Caco-2 (cell line): ENCODE measurements at regions of chr11 and their contacts with region 1.

Region 1: DNA sequence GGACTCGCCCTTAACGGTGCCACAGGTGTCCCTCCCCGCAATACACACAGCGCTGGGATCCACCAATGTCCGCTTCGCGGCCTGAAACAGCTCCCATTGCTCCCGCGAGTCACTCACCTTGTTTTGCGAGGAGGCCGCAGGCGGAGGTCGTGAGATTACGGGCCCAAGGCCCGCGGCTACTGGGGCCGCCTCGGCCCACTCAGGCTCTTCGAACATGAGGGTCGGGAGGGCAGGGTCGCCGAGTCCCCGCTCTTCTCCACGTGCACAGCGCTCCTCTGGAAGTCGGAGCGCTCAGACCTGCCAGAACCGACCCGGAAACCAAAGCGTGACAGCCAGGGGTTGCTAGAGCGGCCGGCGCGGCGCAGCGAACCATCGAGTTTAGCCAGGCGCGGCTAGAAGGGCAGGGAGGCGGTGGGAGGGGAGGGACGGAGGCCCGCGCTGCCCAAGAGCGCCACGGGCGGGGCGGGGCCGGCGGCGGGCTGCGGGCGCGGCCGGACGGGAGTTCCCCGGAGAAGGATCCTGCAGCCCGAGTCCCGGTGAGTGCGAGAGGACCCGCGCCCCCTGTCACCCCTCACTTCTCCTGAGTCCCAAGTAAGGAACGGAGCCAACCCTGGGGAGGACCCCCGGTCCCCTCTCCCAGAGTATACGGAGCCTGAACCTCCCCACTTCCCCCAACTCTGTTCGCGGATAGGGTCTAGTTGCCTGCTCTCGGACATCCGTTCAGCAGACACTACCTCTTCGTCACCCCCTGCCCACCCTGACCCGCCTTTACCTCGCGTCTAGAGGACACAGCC is at the starts of genes ILK and RRP8:
- DNase-seq: peak; percentile 90 to 93
- H3K4me3 ChIP-seq: peak within 1 kb of the TSS; percentile 60
- H3K4me3 Mint-ChIP-seq: no peak within 1 kb of the TSS
- H3K27ac Mint-ChIP-seq: no peak within 1 kb of the TSS
- H3K4me1 ChIP-seq: peaks cover 38% of the 10 kb centered on the region
- H3K4me1 Mint-ChIP-seq: peaks cover 17% of the 10 kb centered on the region
- H3K27me3 ChIP-seq: no peaks in the 10 kb centered on the region
- H3K27me3 Mint-ChIP-seq: no peaks in the 10 kb centered on the region
- CTCF ChIP-seq: peak in 1 of 2 experiments; percentile 12
- total RNA-seq, gene ILK: 117 and 119 TPM in 2 replicates
- total RNA-seq, gene RRP8: 20.0 and 21.0 TPM in 2 replicates

Region 2: GRCh38 chr11:6473481-6474422 is 129.7 kb before region 1 on chr11 and contains the start of gene TRIM3:
- CTCF ChIA-PET with region 1: no interaction called
- POLR2A ChIA-PET with region 1: interaction called, 4 read pairs
- intact Hi-C with region 1: loop called (anchors 2 kb)
- DNase-seq: peak; percentile 92 to 94
- H3K4me3 ChIP-seq: peak within 1 kb of the TSS; percentile 65
- H3K4me3 Mint-ChIP-seq: peak within 1 kb of the TSS; percentile 84
- H3K27ac Mint-ChIP-seq: peak within 1 kb of the TSS; percentile 96
- H3K4me1 ChIP-seq: peaks cover 30% of the 10 kb centered on the region
- H3K4me1 Mint-ChIP-seq: peaks cover 29% of the 10 kb centered on the region
- H3K27me3 ChIP-seq: no peaks in the 10 kb centered on the region
- H3K27me3 Mint-ChIP-seq: no peaks in the 10 kb centered on the region
- CTCF ChIP-seq: peak in 1 of 2 experiments; percentile 39
- total RNA-seq, gene TRIM3: 28.0 and 33.4 TPM in 2 replicates

Region 3: GRCh38 chr11:6489306-6489705 is 114.2 kb before region 1 on chr11:
- CTCF ChIA-PET with region 1: no interaction called
- POLR2A ChIA-PET with region 1: no interaction called
- intact Hi-C with region 1: loop called (anchors 2 kb)
- DNase-seq: peak in 1 of 2 experiments; percentile 36
- H3K4me3 ChIP-seq: no peak overlapping the region
- H3K4me3 Mint-ChIP-seq: peak overlapping the region; percentile 35
- H3K27ac Mint-ChIP-seq: peak overlapping the region; percentile 29
- H3K4me1 ChIP-seq: peaks cover 62% of the 10 kb centered on the region
- H3K4me1 Mint-ChIP-seq: peaks cover 6% of the 10 kb centered on the region
- H3K27me3 ChIP-seq: no peaks in the 10 kb centered on the region
- H3K27me3 Mint-ChIP-seq: no peaks in the 10 kb centered on the region
- CTCF ChIP-seq: no peak

Region 4: GRCh38 chr11:6619004-6619745 is 15.7 kb after region 1 on chr11 and contains the start of gene TPP1:
- CTCF ChIA-PET with region 1: interaction called, 7 read pairs
- POLR2A ChIA-PET with region 1: interaction called, 11 read pairs
- intact Hi-C with region 1: loop called (anchors 1 kb)
- DNase-seq: peak; percentile 93
- H3K4me3 ChIP-seq: peak within 1 kb of the TSS; percentile 82
- H3K4me3 Mint-ChIP-seq: no peak within 1 kb of the TSS
- H3K27ac Mint-ChIP-seq: no peak within 1 kb of the TSS
- H3K4me1 ChIP-seq: no peaks in the 10 kb centered on the region
- H3K4me1 Mint-ChIP-seq: no peaks in the 10 kb centered on the region
- H3K27me3 ChIP-seq: no peaks in the 10 kb centered on the region
- H3K27me3 Mint-ChIP-seq: no peaks in the 10 kb centered on the region
- CTCF ChIP-seq: no peak
- total RNA-seq, gene TPP1: 61.7 TPM in 2 replicates

Region 5: GRCh38 chr11:6682936-6683861 is 79.7 kb after region 1 on chr11 and contains the start of gene MRPL17:
- CTCF ChIA-PET with region 1: interaction called, 7 read pairs
- POLR2A ChIA-PET with region 1: interaction called, 8 read pairs
- intact Hi-C with region 1: loop called (anchors 1 kb)
- DNase-seq: peak; percentile 99
- H3K4me3 ChIP-seq: peak within 1 kb of the TSS; percentile 88
- H3K4me3 Mint-ChIP-seq: peak within 1 kb of the TSS; percentile 100
- H3K27ac Mint-ChIP-seq: peak within 1 kb of the TSS; percentile 100
- H3K4me1 ChIP-seq: peaks cover 13% of the 10 kb centered on the region
- H3K4me1 Mint-ChIP-seq: peaks cover 7% of the 10 kb centered on the region
- H3K27me3 ChIP-seq: no peaks in the 10 kb centered on the region
- H3K27me3 Mint-ChIP-seq: peaks cover 5% of the 10 kb centered on the region
- CTCF ChIP-seq: peak; percentile 89 to 91
- total RNA-seq, gene MRPL17: 57.8 and 60.8 TPM in 2 replicates